Sciatic nerve (tissue), 2 donors: ENCODE measurements at regions of chr12 and their contacts with region 1.

Region 1: DNA sequence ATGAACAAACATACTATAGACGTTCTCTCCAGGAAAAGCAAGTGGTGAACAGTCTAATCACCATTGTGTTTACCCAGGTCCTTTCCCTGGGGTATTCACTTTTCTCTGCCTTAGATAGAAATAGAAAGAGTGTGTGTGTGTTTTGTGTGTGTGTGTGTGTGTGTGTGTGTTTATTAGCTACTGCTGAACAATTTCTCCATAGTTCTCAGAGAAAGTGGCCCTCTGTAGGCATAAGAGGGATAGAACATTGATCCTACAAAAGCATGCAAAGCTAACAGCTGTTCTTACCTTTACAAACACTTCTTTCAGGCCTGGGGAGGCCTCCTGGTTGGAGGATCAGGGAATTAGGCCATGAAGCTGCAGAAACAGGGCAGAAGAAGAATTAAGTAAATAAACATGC is 665.7 kb upstream of the TBX3 start:
- DNase-seq: no peak
- ATAC-seq: no peak

Region 2: DNA sequence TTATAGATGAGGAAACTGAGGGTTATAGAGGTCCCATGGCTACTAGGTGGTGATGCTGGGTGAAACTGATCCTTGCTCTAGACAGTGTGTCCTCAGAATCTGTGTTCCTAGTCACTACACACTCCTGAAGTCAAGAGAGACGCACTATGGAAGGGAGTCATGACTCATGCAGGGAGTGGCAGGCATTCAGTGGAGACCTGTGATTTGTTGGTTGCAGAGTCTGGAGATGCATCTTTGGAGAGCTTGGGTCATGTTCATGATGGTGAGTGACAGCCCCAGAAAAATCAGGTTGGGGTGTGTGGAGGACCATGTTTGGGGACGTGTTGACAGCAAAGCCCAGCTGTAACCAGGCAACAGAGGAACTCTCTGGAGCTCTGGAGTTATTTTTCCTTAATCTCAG is 1878.5 kb after region 1 on chr12:
- intact Hi-C with region 1: loop called (anchors 5 kb)
- DNase-seq: no peak
- ATAC-seq: no peak